ENCODE measurements at regions of chr5 and their contacts with region 1.

Region 1: GRCh38 chr5:73454351-73455036 is 5.9 kb upstream of the FOXD1 start:
- DNase-seq: peak; percentile 44 to 77 (median 70)
- ATAC-seq: peak; percentile 88
- H3K4me3 ChIP-seq: no peak overlapping the region
- H3K27ac ChIP-seq: no peak overlapping the region
- H3K4me1 ChIP-seq: peaks cover 3 to 10% of the 10 kb centered on the region in 2 experiments; a peak in 3 of 5 replicates
- H3K27me3 ChIP-seq: peaks cover 27 to 39% of the 10 kb centered on the region in 2 experiments
- CTCF ChIP-seq: peak; percentile 73 to 83 (median 76)
- EP300 ChIP-seq: no peak
- POLR2A ChIP-seq: no peak
- RAD21 ChIP-seq: peak; percentile 26 to 46; a peak in 2 of 4 replicates

Region 2: GRCh38 chr5:73081093-73081492 is 373.4 kb before region 1 on chr5:
- CTCF ChIA-PET with region 1: no interaction called
- POLR2A ChIA-PET with region 1: no interaction called
- in situ Hi-C with region 1: no loop called
- intact Hi-C with region 1: loop called (anchors 5 kb)
- DNase-seq: no peak
- ATAC-seq: no peak
- H3K4me3 ChIP-seq: no peak overlapping the region
- H3K27ac ChIP-seq: no peak overlapping the region
- H3K4me1 ChIP-seq: no peaks in the 10 kb centered on the region
- H3K27me3 ChIP-seq: no peaks in the 10 kb centered on the region
- CTCF ChIP-seq: no peak
- EP300 ChIP-seq: no peak
- POLR2A ChIP-seq: no peak
- RAD21 ChIP-seq: no peak

Region 3: GRCh38 chr5:73215891-73216610 is 238.4 kb before region 1 on chr5:
- CTCF ChIA-PET with region 1: no interaction called
- POLR2A ChIA-PET with region 1: no interaction called
- in situ Hi-C with region 1: no loop called
- intact Hi-C with region 1: loop called (anchors 5 kb)
- DNase-seq: peak; percentile 81 to 88 (median 85)
- ATAC-seq: peak; percentile 100
- H3K4me3 ChIP-seq: peak overlapping the region; percentile 28
- H3K27ac ChIP-seq: no peak overlapping the region
- H3K4me1 ChIP-seq: peaks cover 5 to 10% of the 10 kb centered on the region in 2 experiments; a peak in 3 of 5 replicates
- H3K27me3 ChIP-seq: peaks cover 15 to 35% of the 10 kb centered on the region in 2 experiments
- CTCF ChIP-seq: peak; percentile 73 to 88 (median 73)
- EP300 ChIP-seq: no peak
- POLR2A ChIP-seq: no peak
- RAD21 ChIP-seq: peak; percentile 54 to 68

Region 4: DNA sequence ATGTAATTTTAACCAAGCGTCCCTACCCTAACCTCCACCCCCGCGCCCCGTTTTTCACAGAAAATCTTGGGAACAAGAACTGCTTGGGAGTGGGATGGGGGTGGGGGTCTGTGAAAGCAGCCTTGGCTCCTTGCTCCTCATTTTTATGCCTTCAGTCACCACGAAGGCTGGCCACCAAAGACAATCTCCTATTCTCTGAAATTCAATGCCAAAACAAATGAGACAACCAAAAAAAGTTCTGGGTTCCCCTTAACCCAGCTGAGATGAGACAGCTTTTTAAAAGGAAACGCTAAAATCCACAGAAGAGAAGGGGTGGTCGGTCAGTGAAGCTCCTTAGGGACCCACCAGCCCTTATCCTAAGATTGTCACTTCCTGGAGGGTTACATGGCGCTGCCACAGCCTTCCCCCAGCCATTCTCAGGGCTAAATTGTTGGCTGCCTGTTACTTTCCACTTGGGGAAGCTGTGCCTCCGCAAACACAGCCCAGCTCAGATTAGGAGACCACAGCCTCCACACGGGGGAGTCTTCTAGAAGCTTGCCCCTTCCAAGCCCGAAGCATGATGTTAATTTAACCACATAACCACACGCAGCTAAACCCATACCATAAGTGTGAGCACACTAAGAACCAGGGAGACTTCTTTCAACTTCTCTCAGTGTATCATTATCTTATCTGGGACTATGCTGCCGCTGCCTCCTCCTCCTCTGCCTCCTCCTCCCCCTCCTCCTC is 142.2 kb before region 1 on chr5:
- CTCF ChIA-PET with region 1: no interaction called
- POLR2A ChIA-PET with region 1: no interaction called
- in situ Hi-C with region 1: no loop called
- intact Hi-C with region 1: loop called (anchors 5 kb)
- DNase-seq: peak in 3 of 4 experiments; percentile 18 to 39 (median 32)
- ATAC-seq: peak; percentile 84
- H3K4me3 ChIP-seq: no peak overlapping the region
- H3K27ac ChIP-seq: no peak overlapping the region
- H3K4me1 ChIP-seq: peaks cover 0 to 3% of the 10 kb centered on the region in 2 experiments; a peak in 1 of 5 replicates
- H3K27me3 ChIP-seq: peaks cover 6 to 47% of the 10 kb centered on the region in 2 experiments
- CTCF ChIP-seq: peak; percentile 29 to 83 (median 51); a peak in 4 of 6 replicates
- EP300 ChIP-seq: no peak
- POLR2A ChIP-seq: no peak
- RAD21 ChIP-seq: peak in 1 of 2 experiments; percentile 52; a peak in 2 of 4 replicates

Region 5: GRCh38 chr5:73498057-73499008 is 43.8 kb after region 1 on chr5 and contains the start of gene BTF3:
- CTCF ChIA-PET with region 1: no interaction called
- POLR2A ChIA-PET with region 1: interaction called, 3 read pairs
- in situ Hi-C with region 1: no loop called
- intact Hi-C with region 1: loop called (anchors 5 kb)
- DNase-seq: peak; percentile 83 to 99 (median 88)
- ATAC-seq: peak; percentile 94
- H3K4me3 ChIP-seq: peak within 1 kb of the TSS; percentile 93
- H3K27ac ChIP-seq: peak within 1 kb of the TSS; percentile 98
- H3K4me1 ChIP-seq: peaks cover 3% of the 10 kb centered on the region in 2 experiments; a peak in 4 of 5 replicates
- H3K27me3 ChIP-seq: no peaks in the 10 kb centered on the region
- CTCF ChIP-seq: no peak
- EP300 ChIP-seq: 0 out of 2 replicates have a peak, but pooled peaks have one; percentile 4
- POLR2A ChIP-seq: peak; percentile 97
- RAD21 ChIP-seq: no peak
- polyA plus RNA-seq, gene BTF3: 1,000 to 1,004 TPM

Region 6: DNA sequence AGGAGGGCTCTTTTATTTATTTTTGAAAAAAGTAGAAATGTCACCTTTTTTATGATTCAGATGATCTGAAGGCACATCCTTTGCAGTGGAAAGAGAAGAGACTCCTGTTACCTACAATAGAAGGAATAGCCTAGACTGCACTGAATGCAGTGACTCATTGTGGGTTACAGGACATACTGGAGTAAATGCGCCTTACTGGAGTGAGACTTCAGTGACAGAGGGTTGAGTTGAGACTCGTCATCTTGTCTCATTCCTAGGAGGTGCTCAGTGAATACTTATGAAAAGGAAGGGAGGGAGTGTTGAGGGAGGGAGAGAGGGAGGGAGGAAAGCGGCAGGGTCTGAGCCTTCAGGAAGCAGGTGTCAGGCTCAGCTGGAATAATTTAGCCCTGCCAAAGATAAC is 85.7 kb after region 1 on chr5:
- CTCF ChIA-PET with region 1: interaction called, 3 read pairs
- POLR2A ChIA-PET with region 1: no interaction called
- in situ Hi-C with region 1: no loop called
- intact Hi-C with region 1: loop called (anchors 2 kb)
- DNase-seq: peak in 1 of 4 experiments; percentile 12
- ATAC-seq: peak; percentile 50; the same call in 2 of the 3 replicates
- H3K4me3 ChIP-seq: no peak overlapping the region
- H3K27ac ChIP-seq: no peak overlapping the region
- H3K4me1 ChIP-seq: peaks cover 0 to 1% of the 10 kb centered on the region in 2 experiments; a peak in 2 of 5 replicates
- H3K27me3 ChIP-seq: no peaks in the 10 kb centered on the region
- CTCF ChIP-seq: no peak
- EP300 ChIP-seq: no peak
- POLR2A ChIP-seq: no peak
- RAD21 ChIP-seq: no peak

Measured in K562 (cell line).